MCF 10A (cell line): ENCODE measurements at regions of chr5 and their contacts with region 1.

Region 1: DNA sequence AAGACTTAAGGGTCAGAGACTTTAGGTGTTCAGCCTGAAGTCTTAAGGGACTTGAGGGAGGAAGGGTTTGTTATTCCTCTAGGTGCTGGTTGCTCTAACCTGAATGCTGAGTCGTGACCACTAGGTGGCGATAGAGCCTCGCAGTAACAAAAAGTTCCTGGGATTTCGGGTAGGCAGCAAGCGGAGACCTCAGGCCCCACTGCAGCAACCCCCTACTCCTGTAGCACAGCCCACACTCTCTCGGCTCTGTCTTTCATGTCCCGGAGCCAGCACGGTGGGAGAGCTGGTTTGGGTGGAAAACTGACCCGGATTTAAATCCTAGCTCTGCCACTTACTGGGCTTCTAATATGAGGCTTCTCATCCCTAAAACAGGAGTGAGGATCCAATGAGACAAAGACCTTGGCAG is 100.3 kb upstream of the PANK3 start:
- DNase-seq: peak; percentile 84
- H3K4me3 Mint-ChIP-seq: no peak overlapping the region
- H3K27ac Mint-ChIP-seq: no peak overlapping the region
- H3K4me1 Mint-ChIP-seq: no peaks in the 10 kb centered on the region
- H3K27me3 Mint-ChIP-seq: no peaks in the 10 kb centered on the region
- CTCF ChIP-seq: peak; percentile 96

Region 2: GRCh38 chr5:168474319-168474718 is 205.2 kb before region 1 on chr5:
- CTCF ChIA-PET with region 1: no interaction called
- POLR2A ChIA-PET with region 1: no interaction called
- intact Hi-C with region 1: no loop called
- DNase-seq: no peak
- H3K4me3 Mint-ChIP-seq: no peak overlapping the region
- H3K27ac Mint-ChIP-seq: no peak overlapping the region
- H3K4me1 Mint-ChIP-seq: peaks cover 15% of the 10 kb centered on the region
- H3K27me3 Mint-ChIP-seq: no peaks in the 10 kb centered on the region
- CTCF ChIP-seq: no peak

Region 3: GRCh38 chr5:168661593-168662485 is 17.7 kb before region 1 on chr5:
- CTCF ChIA-PET with region 1: interaction called, 90 read pairs
- POLR2A ChIA-PET with region 1: interaction called, 3 read pairs
- intact Hi-C with region 1: no loop called
- DNase-seq: no peak
- H3K4me3 Mint-ChIP-seq: no peak overlapping the region
- H3K27ac Mint-ChIP-seq: peak overlapping the region; percentile 32
- H3K4me1 Mint-ChIP-seq: peaks cover 10% of the 10 kb centered on the region
- H3K27me3 Mint-ChIP-seq: no peaks in the 10 kb centered on the region
- CTCF ChIP-seq: no peak

Region 4: GRCh38 chr5:168706655-168707069 is 27.1 kb after region 1 on chr5:
- CTCF ChIA-PET with region 1: interaction called, 19 read pairs
- POLR2A ChIA-PET with region 1: no interaction called
- intact Hi-C with region 1: no loop called
- DNase-seq: peak; percentile 60
- H3K4me3 Mint-ChIP-seq: no peak overlapping the region
- H3K27ac Mint-ChIP-seq: no peak overlapping the region
- H3K4me1 Mint-ChIP-seq: no peaks in the 10 kb centered on the region
- H3K27me3 Mint-ChIP-seq: no peaks in the 10 kb centered on the region
- CTCF ChIP-seq: peak; percentile 53

Region 5: DNA sequence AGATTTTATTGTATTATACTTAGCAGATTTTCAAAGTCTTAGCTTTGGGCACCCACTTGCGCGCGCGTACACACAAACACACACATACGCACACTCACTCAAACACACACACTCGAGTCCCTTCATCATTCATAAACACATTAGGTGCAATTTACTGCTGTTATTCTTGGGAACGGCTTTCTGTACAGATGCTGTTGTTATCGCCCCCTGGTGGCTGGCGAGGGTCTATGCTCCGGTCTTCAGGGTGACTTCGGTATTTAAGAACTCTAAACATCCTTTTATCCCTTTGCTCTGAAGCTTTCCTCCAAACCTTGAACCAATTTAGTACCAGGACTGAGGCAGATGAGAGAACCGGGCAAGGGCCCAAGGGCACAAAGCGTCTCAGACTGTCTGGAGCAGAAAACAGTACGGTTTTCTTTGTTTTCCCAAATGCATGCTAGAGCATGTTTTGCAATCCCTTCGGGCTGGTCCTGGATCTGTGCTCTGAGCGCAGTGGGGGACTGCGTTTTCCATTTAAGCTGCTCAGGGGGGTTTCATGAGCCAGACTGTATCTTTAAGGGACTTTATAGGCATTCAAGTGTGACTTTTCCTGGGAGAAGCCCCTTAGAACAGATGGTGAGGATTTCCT is 623.1 kb after region 1 on chr5:
- CTCF ChIA-PET with region 1: interaction called, 12 read pairs
- POLR2A ChIA-PET with region 1: no interaction called
- intact Hi-C with region 1: loop called (anchors 1 kb)
- DNase-seq: peak; percentile 86
- H3K4me3 Mint-ChIP-seq: peak overlapping the region; percentile 74
- H3K27ac Mint-ChIP-seq: no peak overlapping the region
- H3K4me1 Mint-ChIP-seq: peaks cover 19% of the 10 kb centered on the region
- H3K27me3 Mint-ChIP-seq: no peaks in the 10 kb centered on the region
- CTCF ChIP-seq: peak; percentile 95